Sigmoid colon (tissue), 7 donors: ENCODE measurements at regions of chr13 and their contacts with region 1.

Region 1: DNA sequence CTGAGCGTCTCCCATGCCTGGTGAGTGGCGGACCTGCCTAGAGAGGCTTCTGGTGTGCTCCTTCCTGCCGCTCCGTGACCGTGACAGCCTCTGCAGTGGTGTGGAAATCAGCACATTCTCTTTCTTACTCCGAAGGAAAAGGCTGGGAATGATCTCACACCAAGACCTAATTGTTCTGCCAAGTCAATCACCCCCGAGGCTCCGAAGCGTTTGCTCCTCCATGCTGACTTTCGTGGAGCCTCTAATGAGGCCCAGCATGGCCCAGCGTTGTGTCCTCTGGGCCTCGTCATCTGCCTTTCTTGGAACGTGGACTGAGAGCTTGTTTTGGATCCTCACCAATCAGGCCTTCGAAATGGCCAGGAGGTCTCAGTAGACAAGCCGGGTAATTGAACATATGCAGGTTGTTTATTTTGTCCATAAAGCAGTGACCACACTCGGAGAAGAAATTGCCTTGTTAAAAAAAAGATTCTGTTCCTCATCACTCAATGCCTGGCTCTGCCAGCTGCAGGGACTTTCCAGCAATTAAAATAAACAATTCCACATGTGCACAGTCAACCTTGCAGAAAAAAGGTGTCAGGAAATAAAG is 107.1 kb downstream of the UBL3 start:
- DNase-seq: peak; percentile 96
- H3K4me3 ChIP-seq: peak overlapping the region in 1 of 4 donors; percentile 15
- H3K27ac ChIP-seq: peak overlapping the region; percentile 52 to 86 (median 82)
- H3K4me1 ChIP-seq: peaks cover 0 to 30% (median 24%) of the 10 kb centered on the region in 4 donors
- H3K27me3 ChIP-seq: no peaks in the 10 kb centered on the region
- CTCF ChIP-seq: no peak
- EP300 ChIP-seq: peak; percentile 48 to 80 (median 72)
- POLR2A ChIP-seq: no peak

Region 2: GRCh38 chr13:29435125-29435911 is 308.0 kb before region 1 on chr13:
- intact Hi-C with region 1: loop called (anchors 2 kb)
- DNase-seq: peak; percentile 88
- H3K4me3 ChIP-seq: no peak overlapping the region
- H3K27ac ChIP-seq: peak overlapping the region; percentile 73 to 88 (median 82)
- H3K4me1 ChIP-seq: peaks cover 0 to 55% (median 47%) of the 10 kb centered on the region in 4 donors
- H3K27me3 ChIP-seq: no peaks in the 10 kb centered on the region
- CTCF ChIP-seq: no peak
- EP300 ChIP-seq: peak; percentile 94 to 97 (median 96)
- POLR2A ChIP-seq: no peak

Region 3: GRCh38 chr13:29513397-29514322 is 229.6 kb before region 1 on chr13:
- intact Hi-C with region 1: loop called (anchors 5 kb)
- DNase-seq: no peak
- H3K4me3 ChIP-seq: no peak overlapping the region
- H3K27ac ChIP-seq: no peak overlapping the region
- H3K4me1 ChIP-seq: peaks cover 0 to 19% (median 15%) of the 10 kb centered on the region in 4 donors
- H3K27me3 ChIP-seq: no peaks in the 10 kb centered on the region
- CTCF ChIP-seq: no peak
- EP300 ChIP-seq: no peak
- POLR2A ChIP-seq: no peak

Region 4: GRCh38 chr13:29707876-29708543 is 35.3 kb before region 1 on chr13:
- intact Hi-C with region 1: no loop called
- DNase-seq: no peak
- H3K4me3 ChIP-seq: no peak overlapping the region
- H3K27ac ChIP-seq: no peak overlapping the region
- H3K4me1 ChIP-seq: peaks cover 0 to 3% (median 0%) of the 10 kb centered on the region in 4 donors
- H3K27me3 ChIP-seq: peaks cover 0 to 1% (median 0%) of the 10 kb centered on the region in 3 donors
- CTCF ChIP-seq: peak in 2 of 4 experiments; percentile 13
- EP300 ChIP-seq: no peak
- POLR2A ChIP-seq: no peak